Breast epithelium (tissue), 4 donors: ENCODE measurements at regions of chr22 and their contacts with region 1.

Region 1: GRCh38 chr22:44493206-44493605 is 4.8 kb downstream of the RTL6 start:
- DNase-seq: no peak
- H3K4me3 ChIP-seq: no peak overlapping the region
- H3K27ac ChIP-seq: no peak overlapping the region
- H3K4me1 ChIP-seq: no peaks in the 10 kb centered on the region
- H3K27me3 ChIP-seq: no peaks in the 10 kb centered on the region
- CTCF ChIP-seq: no peak
- POLR2A ChIP-seq: no peak

Region 2: DNA sequence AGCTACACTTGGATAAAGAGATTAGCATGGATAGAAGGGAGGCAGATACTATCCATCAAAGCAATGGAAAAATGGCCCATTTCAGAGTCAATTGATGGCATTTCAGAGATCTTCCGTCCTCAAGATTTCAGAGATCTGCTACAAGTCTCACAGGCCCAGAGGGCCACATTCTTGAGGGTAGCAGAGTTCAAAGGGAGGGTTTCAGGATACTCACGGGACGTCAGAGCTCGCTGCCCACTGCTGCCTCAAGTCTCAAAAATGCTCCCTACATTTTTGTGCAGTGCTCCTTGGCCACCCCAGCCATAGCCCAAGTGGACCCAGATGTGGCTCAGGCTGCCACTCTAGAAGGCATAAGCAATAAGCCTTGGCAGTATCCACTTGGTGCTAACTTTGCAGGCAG is 20.0 kb before region 1 on chr22:
- intact Hi-C with region 1: no loop called
- DNase-seq: no peak
- H3K4me3 ChIP-seq: no peak overlapping the region
- H3K27ac ChIP-seq: no peak overlapping the region
- H3K4me1 ChIP-seq: no peaks in the 10 kb centered on the region
- H3K27me3 ChIP-seq: no peaks in the 10 kb centered on the region
- CTCF ChIP-seq: no peak
- POLR2A ChIP-seq: no peak

Region 3: GRCh38 chr22:44567846-44568493 is 74.8 kb after region 1 on chr22:
- intact Hi-C with region 1: no loop called
- DNase-seq: peak in 1 of 2 donors; percentile 50
- H3K4me3 ChIP-seq: no peak overlapping the region
- H3K27ac ChIP-seq: no peak overlapping the region
- H3K4me1 ChIP-seq: no peaks in the 10 kb centered on the region
- H3K27me3 ChIP-seq: peaks cover 0 to 3% of the 10 kb centered on the region in 2 donors
- CTCF ChIP-seq: peak in 2 of 3 donors; percentile 16 to 21
- POLR2A ChIP-seq: no peak

Region 4: GRCh38 chr22:45987136-45987861 is 1494.1 kb after region 1 on chr22:
- intact Hi-C with region 1: loop called (anchors 5 kb)
- DNase-seq: no peak
- H3K4me3 ChIP-seq: no peak overlapping the region
- H3K27ac ChIP-seq: no peak overlapping the region
- H3K4me1 ChIP-seq: no peaks in the 10 kb centered on the region
- H3K27me3 ChIP-seq: no peaks in the 10 kb centered on the region
- CTCF ChIP-seq: no peak
- POLR2A ChIP-seq: no peak